PC-9 (cell line): ENCODE measurements at regions of chr2 and their contacts with region 1.

Region 1: DNA sequence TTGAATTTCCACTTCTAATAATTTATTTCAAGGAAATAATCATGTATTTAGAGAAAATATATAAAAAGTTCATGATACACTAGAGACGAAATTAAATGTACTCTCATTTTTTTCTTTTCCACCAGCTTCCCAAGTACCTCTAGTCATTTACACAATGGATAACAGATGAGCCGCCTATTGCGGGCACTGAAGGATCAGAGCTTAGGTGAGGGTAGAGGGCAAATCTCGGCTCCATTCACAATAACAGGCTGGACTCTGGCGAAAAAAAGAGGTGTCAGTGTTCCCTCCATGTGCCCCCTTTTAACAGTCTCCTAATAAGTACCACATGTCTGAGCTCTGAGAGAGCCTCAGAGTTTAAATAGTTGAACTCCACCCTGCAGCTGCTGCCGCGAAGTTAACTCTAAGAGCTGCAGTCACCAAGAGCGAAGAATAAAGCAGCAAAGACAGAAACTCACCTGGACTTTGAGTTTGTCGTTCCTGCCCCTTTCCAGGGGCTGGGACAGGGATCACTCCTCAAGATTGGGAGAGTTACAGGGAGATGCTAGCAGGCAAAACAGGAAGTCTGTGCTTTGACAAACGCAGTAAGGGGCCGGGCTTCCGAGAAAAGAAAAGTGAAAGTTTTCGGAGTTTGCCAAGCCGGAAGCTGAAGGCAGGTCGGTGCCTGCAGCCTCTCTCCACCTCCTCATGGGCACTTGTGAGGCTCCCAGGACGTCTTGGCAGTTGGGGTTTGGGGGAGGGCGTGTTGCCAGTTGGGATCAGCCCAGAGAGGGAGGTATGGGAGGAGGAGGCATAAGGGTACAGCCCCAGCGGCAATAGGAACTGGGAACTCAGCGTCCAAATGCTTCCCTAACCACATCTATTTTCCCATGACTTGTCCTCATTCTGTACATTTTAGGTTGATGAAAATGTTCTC is at the start of gene SP110:
- DNase-seq: peak; percentile 68 to 79
- H3K4me3 ChIP-seq: peak within 1 kb of the TSS; percentile 65
- H3K27ac ChIP-seq: peak within 1 kb of the TSS; percentile 16; the same call in 1 of the 2 replicates
- H3K4me1 ChIP-seq: peaks cover 29% of the 10 kb centered on the region
- H3K27me3 ChIP-seq: no peaks in the 10 kb centered on the region
- CTCF ChIP-seq: no peak
- total RNA-seq, gene SP110: 6.8 and 10.5 TPM in 2 replicates

Region 2: GRCh38 chr2:230124757-230125431 is 94.8 kb before region 1 on chr2:
- CTCF ChIA-PET with region 1: no interaction called
- POLR2A ChIA-PET with region 1: no interaction called
- intact Hi-C with region 1: no loop called
- DNase-seq: no peak
- H3K4me3 ChIP-seq: no peak overlapping the region
- H3K27ac ChIP-seq: no peak overlapping the region
- H3K4me1 ChIP-seq: no peaks in the 10 kb centered on the region
- H3K27me3 ChIP-seq: no peaks in the 10 kb centered on the region
- CTCF ChIP-seq: no peak

Region 3: DNA sequence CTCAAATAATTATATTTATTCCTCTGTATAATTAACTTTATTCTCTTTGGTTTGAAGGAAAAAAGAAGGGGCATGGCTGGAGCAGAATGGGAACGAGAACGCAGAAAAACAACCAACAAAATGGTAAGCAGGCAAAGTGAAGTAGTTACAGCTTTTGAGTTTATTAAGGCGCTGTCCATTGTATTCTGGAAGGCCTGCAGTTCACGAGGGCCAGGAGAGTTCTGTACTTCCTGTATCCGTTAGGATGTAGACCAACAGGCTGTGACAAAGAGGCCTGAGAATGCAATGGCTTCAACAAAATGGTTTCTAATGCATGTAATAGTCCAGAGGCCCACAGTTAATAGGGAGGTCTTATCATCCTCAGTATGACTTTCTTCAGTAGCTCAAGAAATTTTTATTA is 163.8 kb after region 1 on chr2:
- CTCF ChIA-PET with region 1: no interaction called
- POLR2A ChIA-PET with region 1: no interaction called
- intact Hi-C with region 1: no loop called
- DNase-seq: no peak
- H3K4me3 ChIP-seq: no peak overlapping the region
- H3K27ac ChIP-seq: no peak overlapping the region
- H3K4me1 ChIP-seq: no peaks in the 10 kb centered on the region
- H3K27me3 ChIP-seq: no peaks in the 10 kb centered on the region
- CTCF ChIP-seq: no peak

Region 4: GRCh38 chr2:230411570-230412370 is 192.1 kb after region 1 on chr2:
- CTCF ChIA-PET with region 1: no interaction called
- POLR2A ChIA-PET with region 1: no interaction called
- intact Hi-C with region 1: loop called (anchors 5 kb)
- DNase-seq: peak in 1 of 2 experiments; percentile 55
- H3K4me3 ChIP-seq: peak overlapping the region; percentile 75
- H3K27ac ChIP-seq: no peak overlapping the region
- H3K4me1 ChIP-seq: peaks cover 11% of the 10 kb centered on the region
- H3K27me3 ChIP-seq: no peaks in the 10 kb centered on the region
- CTCF ChIP-seq: no peak

Region 5: GRCh38 chr2:231334179-231334930 is 1114.7 kb after region 1 on chr2:
- CTCF ChIA-PET with region 1: no interaction called
- POLR2A ChIA-PET with region 1: no interaction called
- intact Hi-C with region 1: no loop called
- DNase-seq: no peak
- H3K4me3 ChIP-seq: no peak overlapping the region
- H3K27ac ChIP-seq: no peak overlapping the region
- H3K4me1 ChIP-seq: no peaks in the 10 kb centered on the region
- H3K27me3 ChIP-seq: no peaks in the 10 kb centered on the region
- CTCF ChIP-seq: no peak